Upper lobe of right lung (tissue), 1 donor: ENCODE measurements at regions of chr12 and their contacts with region 1.

Region 1: DNA sequence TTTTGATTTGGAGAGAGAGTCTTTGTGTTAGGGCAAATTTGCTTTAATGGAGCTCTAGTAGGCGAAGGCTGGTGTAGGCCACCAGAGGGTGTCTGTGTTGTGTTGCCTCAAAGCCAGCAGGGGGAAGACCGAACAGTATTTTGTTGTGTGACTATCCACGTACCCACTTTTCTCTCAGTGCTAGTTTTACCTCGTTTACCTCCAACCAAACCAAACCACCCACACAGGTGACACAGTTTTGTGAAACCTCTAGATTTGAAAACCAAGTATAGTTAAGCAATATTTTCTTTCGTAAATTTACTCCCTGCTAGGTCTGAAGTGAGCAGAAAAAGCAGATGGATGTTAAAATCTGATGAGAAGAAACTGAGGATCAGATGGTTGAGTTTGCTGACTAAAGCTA is 36.3 kb upstream of the NPFF start:
- DNase-seq: no peak
- ATAC-seq: peak; percentile 94
- H3K4me3 ChIP-seq: no peak overlapping the region
- H3K27ac ChIP-seq: peak overlapping the region; percentile 47
- H3K4me1 ChIP-seq: peaks cover 19% of the 10 kb centered on the region
- H3K27me3 ChIP-seq: no peaks in the 10 kb centered on the region
- CTCF ChIP-seq: peak; percentile 75

Region 2: DNA sequence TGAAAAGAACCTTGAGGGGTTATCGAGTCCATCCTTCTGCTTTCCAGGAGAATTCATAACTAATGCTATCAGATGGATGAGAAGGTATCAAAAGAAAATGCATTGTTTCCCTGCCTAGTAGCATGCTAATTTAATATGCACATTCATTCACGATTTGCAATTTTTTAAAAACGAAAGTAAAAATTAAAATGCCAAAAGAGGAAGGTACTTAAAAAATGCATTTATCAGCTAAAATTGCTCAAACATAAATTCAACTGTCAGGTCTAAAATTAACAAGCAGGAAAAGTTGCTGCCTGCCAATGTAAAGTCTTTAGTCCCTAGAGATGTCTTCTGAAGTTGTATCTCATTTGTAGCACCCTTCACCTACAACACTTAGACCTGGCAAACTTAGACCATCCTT is 74.7 kb after region 1 on chr12:
- intact Hi-C with region 1: loop called (anchors 10 kb)
- DNase-seq: no peak
- ATAC-seq: no peak
- H3K4me3 ChIP-seq: peak overlapping the region; percentile 34
- H3K27ac ChIP-seq: peak overlapping the region; percentile 38
- H3K4me1 ChIP-seq: peaks cover 56% of the 10 kb centered on the region
- H3K27me3 ChIP-seq: no peaks in the 10 kb centered on the region
- CTCF ChIP-seq: no peak

Region 3: GRCh38 chr12:53674977-53675650 is 131.6 kb after region 1 on chr12:
- intact Hi-C with region 1: loop called (anchors 5 kb)
- DNase-seq: no peak
- ATAC-seq: no peak
- H3K4me3 ChIP-seq: peak overlapping the region; percentile 83
- H3K27ac ChIP-seq: peak overlapping the region; percentile 93
- H3K4me1 ChIP-seq: peaks cover 19% of the 10 kb centered on the region
- H3K27me3 ChIP-seq: no peaks in the 10 kb centered on the region
- CTCF ChIP-seq: no peak